Activated CD4-positive, alpha-beta T cell treated with anti-CD3 and anti-CD28 coated beads, Interleukin-2, amount 10 ng/mL, durations not matched to agents 24 days and 14 days (primary cell): ENCODE measurements at regions of chr12 and their contacts with region 1.

Region 1: DNA sequence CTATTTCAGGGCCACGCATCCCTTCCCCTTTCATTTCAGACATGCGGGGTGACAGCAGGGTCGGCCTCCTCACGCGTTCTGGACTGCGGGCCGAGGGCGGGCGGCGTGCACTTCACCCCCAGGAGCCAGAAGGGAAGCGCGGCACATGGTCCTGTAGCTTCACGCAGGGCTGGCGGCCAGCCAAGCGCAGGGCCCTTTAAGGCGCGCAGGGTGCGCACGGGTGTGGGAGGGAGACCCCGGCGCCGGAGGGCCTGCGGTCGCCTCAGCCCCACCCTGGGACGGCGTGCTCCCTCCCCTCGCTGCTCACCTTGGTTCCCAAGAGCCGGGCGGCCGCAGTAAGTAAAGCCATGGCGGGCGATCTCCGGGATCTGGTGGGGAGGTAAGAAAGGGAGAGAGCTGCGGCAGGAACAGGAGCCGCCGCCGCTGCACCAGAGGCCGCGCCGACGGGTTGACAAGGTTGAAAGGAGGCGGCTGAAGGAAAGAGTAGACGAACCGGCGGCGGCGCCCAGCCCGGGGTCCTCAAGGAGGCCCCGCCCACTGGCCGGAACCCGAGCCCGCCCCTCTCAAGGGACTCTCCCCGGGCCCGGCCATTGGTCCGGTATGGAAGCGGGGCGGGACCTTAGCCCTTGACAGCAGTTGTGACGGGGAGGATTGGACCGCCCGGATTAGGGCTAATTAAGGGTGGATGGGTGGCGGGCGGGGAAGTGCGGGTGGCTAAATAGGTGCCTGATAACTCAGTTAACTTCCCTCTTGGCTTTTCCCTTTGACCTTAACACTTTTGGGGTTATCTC is at the start of gene CS:
- DNase-seq: peak; percentile 99
- H3K4me3 Mint-ChIP-seq: peak within 1 kb of the TSS; percentile 99
- H3K27ac Mint-ChIP-seq: peak within 1 kb of the TSS; percentile 97
- H3K4me1 Mint-ChIP-seq: peaks cover 39% of the 10 kb centered on the region
- H3K27me3 Mint-ChIP-seq: no peaks in the 10 kb centered on the region
- total RNA-seq, gene CS: 311 and 317 TPM in 2 replicates

Region 2: DNA sequence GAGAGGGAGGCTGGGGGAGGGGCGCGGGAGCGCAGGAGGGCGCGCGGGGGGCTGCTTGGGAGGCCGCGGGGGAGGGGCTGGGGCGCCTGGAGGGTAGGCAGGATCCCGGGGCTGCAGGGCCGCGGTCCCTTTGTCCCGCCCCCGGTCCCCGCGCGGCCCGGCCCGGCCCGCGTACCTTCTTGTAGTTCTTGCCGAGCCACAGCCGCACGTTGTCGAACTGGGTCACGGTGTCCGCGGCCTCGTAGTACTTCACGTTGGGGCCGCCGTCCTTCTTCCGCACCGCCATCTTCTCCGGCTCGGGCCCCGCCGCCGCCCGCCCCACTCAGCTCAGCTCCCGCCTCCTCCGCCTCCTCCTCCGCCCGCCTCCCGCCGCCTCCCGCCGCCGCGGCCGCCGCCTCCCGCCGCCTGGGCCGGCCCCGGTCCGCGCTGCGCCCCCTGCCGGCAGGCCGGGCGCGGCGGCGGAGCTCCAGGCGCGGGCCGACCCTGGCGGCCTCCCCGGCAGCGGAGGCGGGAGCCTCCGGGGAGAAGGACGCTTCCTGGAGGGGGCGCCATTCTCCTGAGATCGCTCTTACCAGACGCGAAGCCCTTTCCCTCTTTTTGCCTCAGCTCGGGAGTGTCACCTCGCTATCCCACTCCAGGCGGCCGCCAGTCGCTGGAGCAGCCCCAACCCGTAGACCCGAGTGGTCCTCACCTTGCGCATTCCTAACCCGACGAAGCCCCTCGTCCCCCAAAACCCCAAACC is 110.7 kb before region 1 on chr12 and contains the start of gene SMARCC2:
- intact Hi-C with region 1: loop called (anchors 1 kb)
- DNase-seq: peak; percentile 96
- H3K4me3 Mint-ChIP-seq: peak within 1 kb of the TSS; percentile 97
- H3K27ac Mint-ChIP-seq: peak within 1 kb of the TSS; percentile 95
- H3K4me1 Mint-ChIP-seq: peaks cover 42% of the 10 kb centered on the region
- H3K27me3 Mint-ChIP-seq: no peaks in the 10 kb centered on the region
- total RNA-seq, gene SMARCC2: 127 and 130 TPM in 2 replicates

Region 3: DNA sequence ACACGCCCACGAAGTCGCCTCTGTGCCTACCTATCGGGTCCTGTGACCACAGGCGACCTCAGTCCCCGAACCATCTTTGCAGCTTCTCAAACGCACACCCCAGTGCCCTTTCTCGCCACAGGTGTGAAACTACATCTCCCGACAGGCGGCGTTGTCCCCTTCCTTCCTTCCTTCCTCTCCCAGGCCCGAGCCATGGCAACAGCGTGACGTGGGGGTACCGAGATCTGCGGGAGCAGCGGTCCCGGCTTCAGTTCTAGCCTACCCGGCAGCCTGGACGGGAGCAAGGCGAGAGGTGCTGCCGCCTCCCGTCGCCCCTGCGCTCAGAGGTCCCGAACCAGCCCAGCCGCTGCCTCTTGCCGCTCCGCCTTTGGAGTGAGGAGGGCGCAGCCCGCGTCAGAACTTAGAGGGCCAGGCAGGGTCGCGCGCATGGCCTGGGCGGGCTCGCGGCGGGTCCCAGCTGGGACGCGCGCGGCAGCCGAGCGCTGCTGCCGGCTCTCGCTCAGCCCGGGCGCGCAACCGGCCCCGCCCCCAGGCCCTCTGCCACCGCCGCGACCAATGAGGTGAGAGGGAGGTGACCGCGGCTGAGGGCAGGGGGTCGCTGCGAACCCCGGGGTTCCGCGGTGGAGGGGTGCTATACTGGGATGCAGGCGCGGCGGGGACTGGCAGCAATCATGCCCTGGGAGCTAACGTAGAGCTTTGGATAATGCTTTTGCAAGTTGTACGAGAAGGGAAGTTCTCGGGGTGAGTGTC is 33.2 kb before region 1 on chr12 and contains the start of gene COQ10A:
- intact Hi-C with region 1: loop called (anchors 2 kb)
- DNase-seq: peak; percentile 96
- H3K4me3 Mint-ChIP-seq: peak within 1 kb of the TSS; percentile 93
- H3K27ac Mint-ChIP-seq: peak within 1 kb of the TSS; percentile 94
- H3K4me1 Mint-ChIP-seq: peaks cover 14% of the 10 kb centered on the region
- H3K27me3 Mint-ChIP-seq: no peaks in the 10 kb centered on the region
- total RNA-seq, gene COQ10A: 17.0 TPM in 2 replicates

Region 4: DNA sequence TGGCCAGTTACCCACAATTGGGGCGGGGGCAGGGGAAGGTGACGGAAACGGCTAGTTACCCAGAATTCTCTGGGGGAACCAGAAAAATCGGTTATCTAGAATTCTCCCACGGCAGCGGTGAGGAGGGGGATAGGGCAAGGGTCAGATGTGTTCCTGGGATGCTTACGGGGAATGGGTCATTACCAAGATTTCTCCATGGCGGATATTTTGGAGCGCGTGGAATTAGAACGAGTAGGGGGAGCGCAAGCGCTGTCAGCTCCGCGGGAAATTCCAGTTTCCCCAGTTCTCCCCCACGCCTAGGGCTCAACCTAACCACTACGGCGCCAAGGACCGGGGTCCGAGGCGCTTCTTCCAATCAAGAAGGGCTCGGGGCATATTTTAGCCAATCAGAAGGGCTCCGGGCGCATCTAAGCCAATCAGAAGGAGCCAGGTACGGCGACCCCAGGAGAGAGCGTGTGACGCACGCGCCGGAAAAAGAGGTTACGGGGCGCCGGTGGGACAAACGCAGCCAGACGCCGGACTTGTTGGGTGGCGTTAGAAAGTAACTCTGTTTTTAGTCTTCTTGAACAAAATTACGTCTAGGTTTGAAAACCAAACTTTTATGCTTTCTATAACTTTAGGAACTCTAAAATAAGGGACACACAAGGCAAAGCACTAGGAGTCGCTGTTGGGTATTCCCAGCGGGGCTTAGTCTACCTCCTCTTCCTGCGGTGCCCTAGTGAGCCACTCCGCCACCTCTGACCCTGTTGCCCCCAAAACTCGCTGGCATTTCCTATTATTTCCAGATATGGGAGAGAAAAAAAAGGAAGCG is 33.8 kb after region 1 on chr12 and contains the start of gene PAN2:
- intact Hi-C with region 1: loop called (anchors 1 kb)
- DNase-seq: peak; percentile 98
- H3K4me3 Mint-ChIP-seq: peak within 1 kb of the TSS; percentile 88
- H3K27ac Mint-ChIP-seq: peak within 1 kb of the TSS; percentile 99
- H3K4me1 Mint-ChIP-seq: peaks cover 42% of the 10 kb centered on the region
- H3K27me3 Mint-ChIP-seq: no peaks in the 10 kb centered on the region
- total RNA-seq, gene PAN2: 31.3 and 34.7 TPM in 2 replicates